Naive thymus-derived CD4-positive, alpha-beta T cell (primary cell): ENCODE measurements at regions of chr1 and their contacts with region 1.

Region 1: GRCh38 chr1:84077476-84078107 is 66.5 kb upstream of the PRKACB start:
- DNase-seq: peak; percentile 64 to 79 (median 72)
- ATAC-seq: peak; percentile 97
- H3K4me3 ChIP-seq: peak overlapping the region; percentile 79
- H3K4me3 Mint-ChIP-seq: peak overlapping the region; percentile 84 to 93 (median 90)
- H3K27ac ChIP-seq: peak overlapping the region; percentile 66
- H3K27ac Mint-ChIP-seq: peak overlapping the region; percentile 23 to 87 (median 75)
- H3K4me1 ChIP-seq: peaks cover 9 to 10% of the 10 kb centered on the region in 2 donors
- H3K4me1 Mint-ChIP-seq: peaks cover 6 to 23% (median 14%) of the 10 kb centered on the region in 7 donors
- H3K27me3 ChIP-seq: no peaks in the 10 kb centered on the region
- H3K27me3 Mint-ChIP-seq: peaks cover 0 to 35% (median 0%) of the 10 kb centered on the region in 5 donors

Region 2: GRCh38 chr1:83860490-83861221 is 216.9 kb before region 1 on chr1:
- CTCF ChIA-PET with region 1: no interaction called
- POLR2A ChIA-PET with region 1: no interaction called
- intact Hi-C with region 1: loop called in 1 of 2 experiments (anchors 5 kb)
- DNase-seq: peak; percentile 61 to 80 (median 75)
- ATAC-seq: peak; percentile 93
- H3K4me3 ChIP-seq: peak overlapping the region; percentile 68
- H3K4me3 Mint-ChIP-seq: peak overlapping the region; percentile 70 to 91 (median 88)
- H3K27ac ChIP-seq: peak overlapping the region; percentile 89
- H3K27ac Mint-ChIP-seq: peak overlapping the region; percentile 67 to 96 (median 93)
- H3K4me1 ChIP-seq: peaks cover 0 to 4% of the 10 kb centered on the region in 2 donors
- H3K4me1 Mint-ChIP-seq: peaks cover 8 to 32% (median 20%) of the 10 kb centered on the region in 7 donors
- H3K27me3 ChIP-seq: no peaks in the 10 kb centered on the region
- H3K27me3 Mint-ChIP-seq: no peaks in the 10 kb centered on the region

Region 3: DNA sequence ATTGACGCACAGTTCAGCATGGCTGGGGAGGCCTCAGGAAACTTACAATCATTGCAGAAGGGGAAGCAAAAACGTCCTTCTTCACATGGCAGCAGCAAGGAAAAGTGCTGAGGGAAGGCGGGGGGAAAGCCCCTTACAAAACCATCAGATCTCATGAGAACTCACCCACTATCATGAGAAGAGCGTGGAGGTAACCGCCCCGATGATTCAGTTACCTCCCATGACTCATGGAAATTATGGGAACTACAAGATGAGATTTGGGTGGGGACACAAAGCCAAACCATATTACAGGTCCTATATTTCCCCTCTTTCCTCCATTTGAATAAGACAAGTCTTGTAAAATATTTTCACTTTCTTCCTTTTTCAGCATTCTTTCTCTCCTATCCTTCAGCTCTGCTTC is 71.0 kb before region 1 on chr1:
- CTCF ChIA-PET with region 1: no interaction called
- POLR2A ChIA-PET with region 1: no interaction called
- intact Hi-C with region 1: no loop called
- DNase-seq: no peak
- ATAC-seq: no peak
- H3K4me3 ChIP-seq: no peak overlapping the region
- H3K4me3 Mint-ChIP-seq: no peak overlapping the region
- H3K27ac ChIP-seq: no peak overlapping the region
- H3K27ac Mint-ChIP-seq: no peak overlapping the region
- H3K4me1 ChIP-seq: no peaks in the 10 kb centered on the region
- H3K4me1 Mint-ChIP-seq: no peaks in the 10 kb centered on the region
- H3K27me3 ChIP-seq: no peaks in the 10 kb centered on the region
- H3K27me3 Mint-ChIP-seq: peaks cover 28 to 59% (median 57%) of the 10 kb centered on the region in 5 donors

Region 4: GRCh38 chr1:84090447-84091245 is 13.1 kb after region 1 on chr1:
- CTCF ChIA-PET with region 1: interaction called, 3 read pairs
- POLR2A ChIA-PET with region 1: interaction called, 20 read pairs
- intact Hi-C with region 1: loop called (anchors 1 kb)
- DNase-seq: peak in 7 of 9 donors; percentile 26 to 58 (median 43)
- ATAC-seq: peak; percentile 70
- H3K4me3 ChIP-seq: peak overlapping the region; percentile 51
- H3K4me3 Mint-ChIP-seq: peak overlapping the region; percentile 65 to 89 (median 79)
- H3K27ac ChIP-seq: peak overlapping the region; percentile 67
- H3K27ac Mint-ChIP-seq: peak overlapping the region; percentile 10 to 97 (median 83)
- H3K4me1 ChIP-seq: peaks cover 7 to 14% of the 10 kb centered on the region in 2 donors
- H3K4me1 Mint-ChIP-seq: peaks cover 6 to 29% (median 23%) of the 10 kb centered on the region in 7 donors
- H3K27me3 ChIP-seq: no peaks in the 10 kb centered on the region
- H3K27me3 Mint-ChIP-seq: peaks cover 0 to 14% (median 0%) of the 10 kb centered on the region in 5 donors

Region 5: GRCh38 chr1:84298328-84298683 is 220.7 kb after region 1 on chr1:
- CTCF ChIA-PET with region 1: no interaction called
- POLR2A ChIA-PET with region 1: no interaction called
- intact Hi-C with region 1: loop called (anchors 5 kb)
- DNase-seq: peak; percentile 40 to 65 (median 46)
- ATAC-seq: peak; percentile 88
- H3K4me3 ChIP-seq: peak overlapping the region; percentile 92
- H3K4me3 Mint-ChIP-seq: peak overlapping the region; percentile 83 to 95 (median 90)
- H3K27ac ChIP-seq: peak overlapping the region; percentile 69
- H3K27ac Mint-ChIP-seq: peak overlapping the region; percentile 67 to 85 (median 79)
- H3K4me1 ChIP-seq: peaks cover 4 to 25% of the 10 kb centered on the region in 2 donors
- H3K4me1 Mint-ChIP-seq: peaks cover 17 to 52% (median 42%) of the 10 kb centered on the region in 7 donors
- H3K27me3 ChIP-seq: no peaks in the 10 kb centered on the region
- H3K27me3 Mint-ChIP-seq: peaks cover 0 to 16% (median 6%) of the 10 kb centered on the region in 5 donors

Region 6: DNA sequence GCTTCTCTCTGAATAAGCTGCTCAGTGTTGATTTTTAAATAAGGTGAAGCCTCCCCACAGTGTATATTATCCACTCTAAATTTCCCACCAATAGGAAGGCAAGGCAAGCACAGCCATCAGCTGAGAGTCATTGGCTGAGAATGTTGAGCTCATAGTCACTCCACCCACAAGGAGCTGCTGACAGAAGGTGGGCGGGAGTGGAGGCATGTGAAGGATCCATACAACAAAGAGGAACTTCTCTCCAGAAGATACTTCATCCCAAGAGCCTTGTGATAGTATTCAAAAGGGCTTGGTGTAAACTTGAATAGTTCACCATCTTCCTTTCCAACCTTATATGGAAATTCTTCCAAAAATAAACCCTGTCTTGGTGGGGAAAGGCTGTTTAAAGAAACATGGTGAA is 266.7 kb after region 1 on chr1:
- CTCF ChIA-PET with region 1: no interaction called
- POLR2A ChIA-PET with region 1: no interaction called
- intact Hi-C with region 1: no loop called
- DNase-seq: no peak
- ATAC-seq: no peak
- H3K4me3 ChIP-seq: no peak overlapping the region
- H3K4me3 Mint-ChIP-seq: no peak overlapping the region
- H3K27ac ChIP-seq: no peak overlapping the region
- H3K27ac Mint-ChIP-seq: no peak overlapping the region
- H3K4me1 ChIP-seq: no peaks in the 10 kb centered on the region
- H3K4me1 Mint-ChIP-seq: no peaks in the 10 kb centered on the region
- H3K27me3 ChIP-seq: no peaks in the 10 kb centered on the region
- H3K27me3 Mint-ChIP-seq: peaks cover 0 to 5% (median 4%) of the 10 kb centered on the region in 5 donors

Region 7: DNA sequence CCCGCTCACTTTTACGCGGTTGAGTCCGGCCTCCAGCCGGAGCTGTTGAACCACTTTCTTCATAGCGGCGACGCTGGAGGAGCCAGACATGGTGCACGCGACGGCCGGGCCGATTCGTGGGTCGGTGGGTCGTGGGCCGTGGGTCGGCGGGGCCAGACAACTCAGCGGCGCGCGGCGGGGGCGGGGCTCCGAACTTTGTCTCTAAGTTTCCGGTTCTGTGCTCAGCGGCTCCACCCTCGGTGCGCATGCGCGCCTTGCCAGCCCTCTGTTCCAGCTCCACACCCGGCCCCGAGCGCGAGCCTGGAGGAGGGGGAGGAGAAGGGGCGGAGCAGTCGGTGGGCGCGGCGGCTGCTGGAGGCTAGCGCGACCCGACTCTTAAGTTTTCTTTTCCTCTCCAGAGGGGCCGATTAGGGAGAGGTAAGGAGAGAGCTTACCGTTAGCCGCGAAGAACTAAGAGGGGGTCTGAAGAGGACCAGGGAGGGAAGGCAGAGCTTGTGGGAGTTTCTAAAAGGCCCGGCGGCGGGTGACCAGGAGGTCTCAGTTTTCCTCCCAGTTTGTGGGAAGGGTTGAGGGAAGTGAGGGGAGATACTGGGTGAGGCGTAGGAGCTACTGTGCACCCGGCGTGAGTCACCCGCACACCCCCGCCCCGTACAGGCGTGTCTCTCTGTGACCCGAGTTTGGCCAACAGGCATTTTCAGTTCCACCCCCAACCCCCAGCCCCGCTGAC is 428.6 kb after region 1 on chr1 and contains the starts of genes GNG5 and SPATA1:
- CTCF ChIA-PET with region 1: no interaction called
- POLR2A ChIA-PET with region 1: no interaction called
- intact Hi-C with region 1: loop called (anchors 1 to 5 kb)
- DNase-seq: peak; percentile 94 to 98 (median 96)
- ATAC-seq: peak; percentile 95
- H3K4me3 ChIP-seq: peak within 1 kb of the TSS; percentile 94
- H3K4me3 Mint-ChIP-seq: peak within 1 kb of the TSS; percentile 94 to 100 (median 98)
- H3K27ac ChIP-seq: peak within 1 kb of the TSS; percentile 76
- H3K27ac Mint-ChIP-seq: peak within 1 kb of the TSS; percentile 93 to 99 (median 96)
- H3K4me1 ChIP-seq: peaks cover 15 to 27% of the 10 kb centered on the region in 2 donors
- H3K4me1 Mint-ChIP-seq: peaks cover 18 to 54% (median 50%) of the 10 kb centered on the region in 7 donors
- H3K27me3 ChIP-seq: no peaks in the 10 kb centered on the region
- H3K27me3 Mint-ChIP-seq: peaks cover 0 to 2% (median 0%) of the 10 kb centered on the region in 5 donors
- total RNA-seq, gene GNG5: 24.8 to 90.7 (median 28.9) TPM
- total RNA-seq, gene SPATA1: 1.7 to 3.6 (median 2.2) TPM in 4 of 5 experiments, not detected in the other

Region 8: GRCh38 chr1:85707990-85708828 is 1630.6 kb after region 1 on chr1 and contains the start of gene ZNHIT6:
- CTCF ChIA-PET with region 1: no interaction called
- POLR2A ChIA-PET with region 1: no interaction called
- intact Hi-C with region 1: loop called in 1 of 2 experiments (anchors 10 kb)
- DNase-seq: peak; percentile 62 to 94 (median 89)
- ATAC-seq: peak; percentile 99
- H3K4me3 ChIP-seq: peak within 1 kb of the TSS; percentile 90
- H3K4me3 Mint-ChIP-seq: no peak within 1 kb of the TSS
- H3K27ac ChIP-seq: peak within 1 kb of the TSS; percentile 77
- H3K27ac Mint-ChIP-seq: no peak within 1 kb of the TSS
- H3K4me1 ChIP-seq: peaks cover 14 to 21% of the 10 kb centered on the region in 2 donors
- H3K4me1 Mint-ChIP-seq: peaks cover 11 to 33% (median 18%) of the 10 kb centered on the region in 7 donors
- H3K27me3 ChIP-seq: no peaks in the 10 kb centered on the region
- H3K27me3 Mint-ChIP-seq: no peaks in the 10 kb centered on the region
- total RNA-seq, gene ZNHIT6: 13.8 to 22.2 (median 20.2) TPM